Testis (tissue), 5 donors: ENCODE measurements at regions of chr14 and their contacts with region 1.

Region 1: GRCh38 chr14:45134051-45134958 is at the start of gene FKBP3:
- DNase-seq: peak; percentile 100
- H3K4me3 ChIP-seq: peak within 1 kb of the TSS; percentile 86 to 93
- H3K27ac ChIP-seq: peak within 1 kb of the TSS; percentile 91 to 93
- H3K4me1 ChIP-seq: peaks cover 22% of the 10 kb centered on the region
- H3K27me3 ChIP-seq: no peaks in the 10 kb centered on the region
- CTCF ChIP-seq: no peak
- POLR2A ChIP-seq: peak; percentile 56
- total RNA-seq, gene FKBP3: 60.8 to 65.0 TPM

Region 2: DNA sequence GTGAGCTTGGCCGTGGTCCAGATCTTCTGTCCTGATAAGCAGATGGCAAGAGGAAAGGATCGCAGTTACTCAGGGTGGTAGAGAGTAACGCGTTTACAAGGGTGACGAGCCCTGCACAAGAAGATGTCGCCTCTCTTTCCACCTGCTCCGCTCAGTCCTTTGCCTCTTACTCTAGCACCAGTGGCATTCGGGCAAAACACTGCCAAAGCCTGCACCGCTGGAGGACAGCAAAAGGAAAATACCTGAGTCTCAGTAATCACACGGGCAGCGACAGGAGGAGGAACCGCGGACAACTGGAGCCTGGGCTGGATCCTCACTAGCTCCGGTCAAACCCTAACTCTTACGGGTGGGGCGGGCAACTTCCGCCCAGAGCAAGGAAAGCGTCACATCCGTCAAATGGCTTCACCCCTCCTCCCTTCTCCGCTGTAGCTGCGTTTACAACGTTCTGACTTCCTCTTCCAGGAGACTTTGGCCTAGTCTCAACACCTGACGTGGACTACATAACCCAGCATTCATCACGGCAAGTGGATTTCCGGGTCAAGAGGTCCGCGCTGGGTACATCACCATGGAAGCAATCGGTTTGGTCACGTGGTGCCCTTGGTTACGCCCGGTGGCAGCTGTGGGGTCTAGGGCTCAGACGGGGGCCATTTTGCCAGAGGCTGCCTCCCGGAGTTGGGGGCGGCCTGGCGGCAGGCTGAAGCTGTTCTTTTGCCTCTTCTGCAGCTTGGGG is 172.5 kb before region 1 on chr14 and contains the starts of genes KLHL28 and TOGARAM1:
- intact Hi-C with region 1: loop called (anchors 10 kb)
- DNase-seq: peak; percentile 100
- H3K4me3 ChIP-seq: peak within 1 kb of the TSS; percentile 87
- H3K27ac ChIP-seq: peak within 1 kb of the TSS; percentile 81 to 90
- H3K4me1 ChIP-seq: peaks cover 15% of the 10 kb centered on the region
- H3K27me3 ChIP-seq: no peaks in the 10 kb centered on the region
- CTCF ChIP-seq: no peak
- POLR2A ChIP-seq: peak; percentile 80
- total RNA-seq, gene KLHL28: 11.4 to 15.4 TPM
- total RNA-seq, gene TOGARAM1: 32.6 to 33.0 TPM

Region 3: GRCh38 chr14:45253068-45253753 is 118.9 kb after region 1 on chr14 and contains the start of gene MIS18BP1:
- intact Hi-C with region 1: loop called (anchors 10 kb)
- DNase-seq: peak; percentile 98
- H3K4me3 ChIP-seq: peak within 1 kb of the TSS; percentile 75 to 77
- H3K27ac ChIP-seq: peak within 1 kb of the TSS; percentile 95 to 97
- H3K4me1 ChIP-seq: peaks cover 7% of the 10 kb centered on the region
- H3K27me3 ChIP-seq: no peaks in the 10 kb centered on the region
- CTCF ChIP-seq: peak; percentile 72 to 82 (median 79)
- POLR2A ChIP-seq: peak; percentile 3
- total RNA-seq, gene MIS18BP1: 60.8 to 71.5 TPM